Psoas muscle (tissue), 8 donors: ENCODE measurements at regions of chr6 and their contacts with region 1.

Region 1: DNA sequence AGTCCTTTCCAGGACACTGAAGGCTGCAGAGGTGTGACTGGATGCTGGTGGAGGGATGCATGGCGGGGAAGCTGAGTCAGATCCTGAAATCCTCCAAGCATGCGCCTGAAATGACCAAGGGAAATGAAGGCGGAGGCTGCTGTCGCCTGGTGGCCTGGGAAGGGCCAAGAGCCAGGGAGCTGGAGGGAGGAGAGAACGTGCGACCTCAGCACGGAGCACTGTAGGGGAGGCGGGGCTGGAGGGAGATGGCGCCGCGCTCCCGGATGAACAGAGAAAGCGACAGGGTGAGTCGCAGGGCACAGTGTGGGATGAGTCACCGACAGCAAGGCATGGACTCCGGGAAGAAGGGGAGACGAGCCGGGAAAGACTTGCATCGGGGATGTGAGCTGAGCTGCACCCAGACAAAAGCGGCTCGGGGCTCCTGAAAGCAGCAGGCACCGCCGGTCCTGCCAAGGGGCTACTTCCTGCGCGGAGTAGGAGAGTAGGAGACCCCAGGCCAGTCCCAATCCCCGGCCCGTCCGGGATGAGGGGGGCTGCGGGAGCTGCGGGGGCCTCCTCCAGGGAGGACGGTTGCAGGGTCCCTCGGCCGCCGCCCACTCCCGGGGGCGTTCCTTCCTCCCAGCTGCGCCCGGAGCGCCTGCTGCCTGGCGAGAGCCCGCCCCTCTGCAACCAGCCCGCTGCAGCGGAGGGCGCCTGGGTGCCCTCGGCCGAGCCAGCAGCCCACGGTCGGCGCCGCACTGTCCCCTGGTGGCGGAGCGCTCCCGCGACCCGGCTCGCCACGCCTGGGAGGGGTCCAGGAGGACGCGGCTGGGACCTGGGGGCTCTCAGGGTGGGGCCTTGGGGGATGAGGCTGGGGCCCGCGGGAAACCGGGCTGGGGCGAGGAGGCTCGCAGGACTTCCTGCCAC is 11.0 kb upstream of the NQO2 start:
- DNase-seq: peak; percentile 92 to 94
- ATAC-seq: peak; percentile 87 to 95 (median 90)
- H3K4me3 ChIP-seq: peak overlapping the region; percentile 78
- H3K27ac ChIP-seq: peak overlapping the region; percentile 96
- H3K4me1 ChIP-seq: peaks cover 9% of the 10 kb centered on the region
- H3K27me3 ChIP-seq: no peaks in the 10 kb centered on the region
- CTCF ChIP-seq: peak; percentile 82

Region 2: GRCh38 chr6:2403546-2403945 is 585.1 kb before region 1 on chr6:
- intact Hi-C with region 1: no loop called
- DNase-seq: no peak
- ATAC-seq: no peak
- H3K4me3 ChIP-seq: no peak overlapping the region
- H3K27ac ChIP-seq: no peak overlapping the region
- H3K4me1 ChIP-seq: no peaks in the 10 kb centered on the region
- H3K27me3 ChIP-seq: no peaks in the 10 kb centered on the region
- CTCF ChIP-seq: no peak

Region 3: GRCh38 chr6:2841264-2842138 is 147.2 kb before region 1 on chr6 and contains the start of gene SERPINB1:
- intact Hi-C with region 1: loop called (anchors 2 to 5 kb)
- DNase-seq: peak; percentile 92 to 95
- ATAC-seq: peak; percentile 85 to 93 (median 92)
- H3K4me3 ChIP-seq: peak within 1 kb of the TSS; percentile 73
- H3K27ac ChIP-seq: peak within 1 kb of the TSS; percentile 97
- H3K4me1 ChIP-seq: peaks cover 34% of the 10 kb centered on the region
- H3K27me3 ChIP-seq: no peaks in the 10 kb centered on the region
- CTCF ChIP-seq: no peak
- total RNA-seq, gene SERPINB1: 10.2 to 62.0 (median 52.2) TPM

Region 4: DNA sequence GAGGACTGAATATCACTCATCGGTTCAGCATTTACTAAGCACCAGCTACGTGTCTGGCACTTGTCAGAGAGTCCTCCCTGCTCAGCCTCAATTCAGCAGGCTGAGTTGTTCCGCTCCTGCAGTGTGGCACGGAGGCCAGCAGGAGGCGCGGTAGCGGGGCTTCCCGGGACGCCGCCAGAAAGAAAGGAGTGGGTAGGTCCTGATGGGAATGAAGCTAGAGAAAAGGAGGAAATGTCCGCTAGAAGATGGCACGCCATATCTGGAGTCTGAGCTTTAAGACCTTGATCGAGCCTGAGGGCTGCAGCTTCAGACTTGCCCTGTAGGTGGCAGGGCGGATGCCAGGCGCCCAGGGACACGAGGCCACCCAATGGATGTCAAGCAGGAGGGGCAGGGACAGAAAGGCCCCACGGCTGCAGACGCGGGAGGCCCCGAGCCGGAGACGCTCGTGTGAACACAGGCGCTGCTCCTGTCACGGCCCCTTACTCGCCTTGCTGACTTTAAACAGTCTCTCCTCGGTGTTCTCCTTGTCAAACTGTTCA is 36.1 kb before region 1 on chr6:
- intact Hi-C with region 1: loop called (anchors 1 to 2 kb)
- DNase-seq: peak; percentile 80 to 86
- ATAC-seq: peak; percentile 79 to 87 (median 82)
- H3K4me3 ChIP-seq: peak overlapping the region; percentile 28
- H3K27ac ChIP-seq: peak overlapping the region; percentile 71
- H3K4me1 ChIP-seq: peaks cover 19% of the 10 kb centered on the region
- H3K27me3 ChIP-seq: no peaks in the 10 kb centered on the region
- CTCF ChIP-seq: peak; percentile 91

Region 5: GRCh38 chr6:3125815-3126214 is 137.1 kb after region 1 on chr6:
- intact Hi-C with region 1: loop called in 1 of 2 experiments (anchors 10 kb)
- DNase-seq: no peak
- ATAC-seq: no peak
- H3K4me3 ChIP-seq: no peak overlapping the region
- H3K27ac ChIP-seq: no peak overlapping the region
- H3K4me1 ChIP-seq: no peaks in the 10 kb centered on the region
- H3K27me3 ChIP-seq: no peaks in the 10 kb centered on the region
- CTCF ChIP-seq: no peak